ENCODE measurements at regions of chr3 and their contacts with region 1.

Region 1: DNA sequence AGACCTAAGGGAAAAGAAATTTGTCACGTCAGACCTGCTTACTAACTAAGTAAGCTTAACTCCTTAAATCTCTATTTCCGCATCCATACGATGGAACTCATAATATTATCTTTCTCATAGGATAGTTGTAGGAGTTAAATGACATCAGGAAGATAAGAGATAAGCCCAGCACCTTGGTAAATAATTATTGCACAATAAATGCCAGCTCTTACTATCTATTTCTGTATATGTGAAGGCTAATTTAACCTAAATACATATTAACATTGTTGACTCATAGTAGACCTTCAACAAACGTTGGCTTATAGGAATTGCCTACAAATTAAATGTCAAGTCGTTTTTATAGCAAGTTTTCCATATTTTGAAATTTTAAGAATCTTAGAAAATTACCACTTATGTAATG is 709.0 kb downstream of the CADM2 start:
- DNase-seq: no peak
- H3K4me3 ChIP-seq: no peak overlapping the region
- H3K27ac ChIP-seq: no peak overlapping the region
- H3K4me1 ChIP-seq: no peaks in the 10 kb centered on the region
- H3K27me3 ChIP-seq: no peaks in the 10 kb centered on the region
- CTCF ChIP-seq: no peak
- EP300 ChIP-seq: no peak
- POLR2A ChIP-seq: no peak

Region 2: GRCh38 chr3:84292128-84292527 is 1375.6 kb before region 1 on chr3:
- in situ Hi-C with region 1: no loop called
- intact Hi-C with region 1: loop called (anchors 5 kb)
- DNase-seq: no peak
- H3K4me3 ChIP-seq: no peak overlapping the region
- H3K27ac ChIP-seq: no peak overlapping the region
- H3K4me1 ChIP-seq: no peaks in the 10 kb centered on the region
- H3K27me3 ChIP-seq: no peaks in the 10 kb centered on the region
- CTCF ChIP-seq: no peak
- EP300 ChIP-seq: no peak
- POLR2A ChIP-seq: no peak